ENCODE measurements at regions of chr11 and their contacts with region 1.

Region 1: GRCh38 chr11:75351791-75352587 is 528 bp upstream of the ARRB1 start:
- DNase-seq: peak; percentile 33 to 86 (median 66)
- ATAC-seq: peak; percentile 64
- H3K4me3 Mint-ChIP-seq: peak overlapping the region; percentile 84 to 95 (median 94)
- H3K27ac Mint-ChIP-seq: peak overlapping the region; percentile 89 to 97 (median 95)
- H3K4me1 Mint-ChIP-seq: peaks cover 51 to 85% (median 73%) of the 10 kb centered on the region in 4 donors
- H3K27me3 Mint-ChIP-seq: no peaks in the 10 kb centered on the region

Region 2: GRCh38 chr11:75280227-75280701 is 71.7 kb before region 1 on chr11:
- POLR2A ChIA-PET with region 1: interaction called, 110 read pairs
- DNase-seq: peak; percentile 54 to 86 (median 72)
- ATAC-seq: peak; percentile 42
- H3K4me3 Mint-ChIP-seq: peak overlapping the region in 7 of 10 donors; percentile 7 to 56 (median 38)
- H3K27ac Mint-ChIP-seq: peak overlapping the region; percentile 79 to 97 (median 92)
- H3K4me1 Mint-ChIP-seq: peaks cover 33 to 56% (median 50%) of the 10 kb centered on the region in 4 donors
- H3K27me3 Mint-ChIP-seq: no peaks in the 10 kb centered on the region

Region 3: DNA sequence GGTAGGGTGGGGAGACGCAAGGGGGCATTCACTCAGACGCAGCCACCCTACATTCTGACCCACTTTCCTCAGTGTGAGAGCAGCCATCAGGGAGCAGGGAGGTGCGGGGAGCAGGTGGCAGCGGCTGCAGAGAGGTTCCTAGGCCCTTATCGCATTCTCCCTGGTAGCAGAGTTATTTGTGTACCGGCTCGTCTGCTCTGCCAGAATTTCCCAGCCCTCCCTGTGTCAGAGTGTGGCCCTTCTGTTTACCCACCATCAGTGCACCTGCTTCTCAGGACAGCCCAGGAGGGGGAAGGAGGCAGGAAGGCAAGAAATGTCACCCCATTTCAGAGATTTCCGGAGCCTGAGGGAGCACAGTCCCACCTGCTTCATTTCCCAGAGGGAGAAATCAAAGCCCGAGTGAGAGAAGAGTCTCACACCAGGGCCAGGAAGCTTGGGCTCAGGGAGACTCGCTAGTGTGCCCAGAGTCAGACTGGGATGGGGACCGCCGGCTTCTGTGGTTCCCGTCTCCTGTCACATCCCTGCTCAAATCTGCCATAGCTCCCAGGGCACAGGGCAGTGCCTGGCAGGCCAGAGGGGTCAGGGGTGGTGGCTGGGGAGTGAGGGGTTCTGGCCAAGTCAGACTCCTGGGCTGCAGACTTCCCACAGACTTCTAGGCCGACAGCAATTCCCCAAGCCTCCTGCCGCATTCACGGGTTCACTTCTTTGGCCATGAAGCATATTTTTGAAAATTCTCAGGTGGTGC is 50.2 kb before region 1 on chr11:
- POLR2A ChIA-PET with region 1: no interaction called
- DNase-seq: no peak
- ATAC-seq: no peak
- H3K4me3 Mint-ChIP-seq: no peak overlapping the region
- H3K27ac Mint-ChIP-seq: peak overlapping the region; percentile 31 to 90 (median 58)
- H3K4me1 Mint-ChIP-seq: peaks cover 22 to 39% (median 36%) of the 10 kb centered on the region in 4 donors
- H3K27me3 Mint-ChIP-seq: no peaks in the 10 kb centered on the region

Region 4: GRCh38 chr11:75328426-75329277 is 23.3 kb before region 1 on chr11:
- POLR2A ChIA-PET with region 1: interaction called, 57 read pairs
- DNase-seq: peak; percentile 19 to 86 (median 58)
- ATAC-seq: peak; percentile 92 to 94
- H3K4me3 Mint-ChIP-seq: peak overlapping the region; percentile 36 to 79 (median 66)
- H3K27ac Mint-ChIP-seq: peak overlapping the region; percentile 31 to 96 (median 90)
- H3K4me1 Mint-ChIP-seq: peaks cover 51 to 86% (median 80%) of the 10 kb centered on the region in 4 donors
- H3K27me3 Mint-ChIP-seq: no peaks in the 10 kb centered on the region

Region 5: GRCh38 chr11:75334976-75335375 is 17.0 kb before region 1 on chr11:
- POLR2A ChIA-PET with region 1: interaction called, 59 read pairs
- DNase-seq: no peak
- ATAC-seq: no peak
- H3K4me3 Mint-ChIP-seq: peak overlapping the region in 5 of 10 donors; percentile 6 to 69 (median 26)
- H3K27ac Mint-ChIP-seq: peak overlapping the region in 8 of 10 donors; percentile 25 to 84 (median 61)
- H3K4me1 Mint-ChIP-seq: peaks cover 63 to 95% (median 92%) of the 10 kb centered on the region in 4 donors
- H3K27me3 Mint-ChIP-seq: no peaks in the 10 kb centered on the region

Region 6: DNA sequence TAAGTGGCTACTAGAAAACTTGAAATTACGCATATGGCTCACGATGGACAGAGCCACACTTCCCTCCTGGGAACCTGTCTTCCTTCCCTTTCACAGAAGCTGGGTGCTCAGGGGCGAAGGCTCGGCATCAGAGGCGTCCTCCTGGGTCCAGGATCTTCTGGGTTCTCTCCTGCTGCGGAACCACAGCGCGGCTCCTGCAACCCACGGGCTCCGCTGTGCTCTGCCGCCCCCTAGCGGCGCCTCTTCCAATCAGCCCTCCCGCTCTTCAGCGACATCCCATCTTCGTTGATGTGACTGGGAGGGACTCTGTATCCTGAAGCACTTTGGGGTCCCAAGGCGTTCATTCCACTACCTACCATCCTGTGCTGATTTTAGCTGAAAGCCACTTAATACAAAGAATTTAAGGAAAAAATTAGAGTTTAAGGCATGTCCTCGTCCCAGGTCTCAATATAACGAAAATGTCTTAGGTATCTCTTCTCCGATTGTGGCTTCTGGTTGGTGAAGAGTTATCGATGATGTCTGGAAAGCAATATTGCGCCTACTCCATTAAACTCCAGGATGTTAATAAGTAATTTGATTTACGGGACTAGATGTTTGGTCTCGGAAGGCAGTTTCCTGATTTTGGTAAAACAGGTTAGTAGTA is 32.6 kb after region 1 on chr11:
- POLR2A ChIA-PET with region 1: interaction called, 67 read pairs
- DNase-seq: peak; percentile 57 to 87 (median 76)
- ATAC-seq: peak; percentile 79 to 90
- H3K4me3 Mint-ChIP-seq: peak overlapping the region in 9 of 10 donors; percentile 57 to 90 (median 81)
- H3K27ac Mint-ChIP-seq: peak overlapping the region in 9 of 10 donors; percentile 82 to 96 (median 92)
- H3K4me1 Mint-ChIP-seq: peaks cover 13 to 28% (median 27%) of the 10 kb centered on the region in 4 donors
- H3K27me3 Mint-ChIP-seq: no peaks in the 10 kb centered on the region

Region 7: GRCh38 chr11:75399344-75400145 is 47.6 kb after region 1 on chr11 and contains the start of gene RPS3:
- POLR2A ChIA-PET with region 1: interaction called, 13 read pairs
- DNase-seq: peak; percentile 77 to 95 (median 88)
- ATAC-seq: peak; percentile 91 to 92
- H3K4me3 Mint-ChIP-seq: peak within 1 kb of the TSS; percentile 91 to 99 (median 96)
- H3K27ac Mint-ChIP-seq: peak within 1 kb of the TSS; percentile 94 to 99 (median 96)
- H3K4me1 Mint-ChIP-seq: peaks cover 38 to 55% (median 47%) of the 10 kb centered on the region in 4 donors
- H3K27me3 Mint-ChIP-seq: no peaks in the 10 kb centered on the region
- polyA plus RNA-seq, gene RPS3: 6,922 to 7,216 (median 7,023) TPM

Measured in naive thymus-derived CD8-positive, alpha-beta T cell (primary cell).